ENCODE measurements at regions of chrX and their contacts with region 1.

Region 1: GRCh38 chrX:120769576-120770341 is 105.9 kb downstream of the CT47B1 start:
- DNase-seq: peak in 1 of 2 donors; percentile 4
- ATAC-seq: peak in 4 of 8 donors; percentile 42 to 59 (median 44)
- H3K4me3 ChIP-seq: no peak overlapping the region
- H3K27ac ChIP-seq: peak overlapping the region in 2 of 10 donors; percentile 19 to 44
- H3K4me1 ChIP-seq: peaks cover 0 to 12% (median 0%) of the 10 kb centered on the region in 9 donors
- H3K27me3 ChIP-seq: no peaks in the 10 kb centered on the region
- CTCF ChIP-seq: peak in 7 of 9 donors; percentile 17 to 58 (median 36)

Region 2: DNA sequence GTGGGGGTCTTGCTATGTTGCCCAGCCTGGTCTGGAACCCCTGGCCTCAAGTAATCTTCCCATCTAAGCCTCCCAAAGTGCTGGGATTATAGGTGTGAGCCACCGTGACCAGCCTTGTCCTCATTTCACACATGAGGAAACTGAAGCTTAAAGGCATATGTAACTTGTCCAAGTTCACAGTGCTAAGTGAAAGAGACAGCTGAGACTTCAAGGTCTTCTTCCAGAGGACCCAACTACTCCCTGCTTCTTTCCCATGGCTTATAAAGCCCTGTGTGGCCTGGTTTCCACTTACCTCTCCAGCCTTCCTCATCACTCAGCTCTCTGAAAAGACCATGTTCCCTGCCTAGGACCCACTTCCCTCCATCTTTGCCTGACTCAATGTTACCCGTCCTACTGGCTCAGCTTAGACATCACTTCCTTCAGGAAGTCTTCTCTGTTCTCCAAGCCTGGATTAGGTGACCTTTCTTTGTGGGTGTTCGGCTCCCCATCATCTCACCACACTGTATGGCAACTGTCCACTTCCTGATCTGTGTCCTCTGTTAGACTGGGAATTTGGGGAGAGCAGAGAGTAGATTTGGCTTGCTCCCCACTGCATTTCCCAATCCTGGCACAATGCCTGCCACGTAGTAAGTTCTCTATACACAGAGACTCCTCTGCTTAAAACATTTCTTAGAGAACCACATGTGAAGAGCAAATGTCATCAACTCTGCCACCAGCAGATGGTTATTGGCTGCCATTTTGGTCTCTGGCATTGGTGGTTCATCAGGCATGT is 270.3 kb before region 1 on chrX:
- intact Hi-C with region 1: loop called (anchors 2 to 10 kb)
- DNase-seq: peak in 1 of 2 donors; percentile 11
- ATAC-seq: no peak
- H3K4me3 ChIP-seq: no peak overlapping the region
- H3K27ac ChIP-seq: no peak overlapping the region
- H3K4me1 ChIP-seq: peaks cover 0 to 3% (median 0%) of the 10 kb centered on the region in 9 donors
- H3K27me3 ChIP-seq: no peaks in the 10 kb centered on the region
- CTCF ChIP-seq: no peak

Region 3: DNA sequence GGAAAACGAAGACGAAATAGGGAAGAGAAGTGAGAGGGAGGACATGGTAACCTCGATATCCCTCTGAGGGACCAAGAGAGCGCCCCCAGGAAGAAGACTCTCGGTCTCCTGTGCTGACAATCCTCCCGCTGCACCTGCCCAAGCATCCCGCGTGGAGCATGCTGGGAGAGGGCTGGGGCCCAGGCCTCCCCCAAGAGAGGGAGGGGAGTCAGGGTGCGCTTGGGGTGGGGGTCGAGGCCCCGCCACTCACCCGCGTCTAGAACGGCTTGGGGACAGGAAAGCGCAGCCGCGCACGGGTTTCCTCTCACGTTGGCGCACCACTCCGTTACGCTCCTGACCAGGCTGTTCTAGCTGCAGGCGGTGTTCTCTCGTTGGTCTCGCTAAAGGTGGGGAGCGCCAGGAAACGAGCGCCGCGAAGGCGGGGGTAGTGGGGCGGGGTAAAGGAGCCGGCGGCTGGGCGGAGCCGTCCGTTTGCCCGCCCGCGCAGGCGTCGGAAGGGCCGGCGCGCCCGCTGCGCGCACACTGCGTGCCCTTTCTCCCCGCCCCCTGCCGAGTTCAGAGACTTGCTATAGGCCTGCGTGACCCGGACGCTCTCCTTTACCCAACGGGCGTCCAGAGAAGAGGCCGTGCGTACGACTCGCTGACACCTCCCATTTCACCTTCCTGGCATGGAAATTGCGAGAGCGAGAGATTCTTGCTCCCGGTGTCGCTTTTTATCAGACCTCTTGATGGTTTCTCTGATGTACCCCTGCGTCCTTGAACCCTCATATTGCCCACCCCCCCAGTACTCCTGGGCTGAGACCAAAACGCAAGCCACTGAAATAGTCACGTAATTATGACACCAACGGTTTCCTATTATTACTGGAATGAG is 139.9 kb before region 1 on chrX and contains the start of gene C1GALT1C1:
- intact Hi-C with region 1: loop called in 1 of 10 experiments (anchors 10 kb)
- DNase-seq: peak; percentile 91 to 92
- ATAC-seq: peak; percentile 99 to 100 (median 99)
- H3K4me3 ChIP-seq: peak within 1 kb of the TSS; percentile 47 to 85 (median 75)
- H3K27ac ChIP-seq: peak within 1 kb of the TSS; percentile 67 to 94 (median 88)
- H3K4me1 ChIP-seq: peaks cover 0 to 26% (median 5%) of the 10 kb centered on the region in 9 donors
- H3K27me3 ChIP-seq: no peaks in the 10 kb centered on the region
- CTCF ChIP-seq: no peak
- total RNA-seq, gene C1GALT1C1: 13.6 to 22.7 (median 17.2) TPM

Region 4: DNA sequence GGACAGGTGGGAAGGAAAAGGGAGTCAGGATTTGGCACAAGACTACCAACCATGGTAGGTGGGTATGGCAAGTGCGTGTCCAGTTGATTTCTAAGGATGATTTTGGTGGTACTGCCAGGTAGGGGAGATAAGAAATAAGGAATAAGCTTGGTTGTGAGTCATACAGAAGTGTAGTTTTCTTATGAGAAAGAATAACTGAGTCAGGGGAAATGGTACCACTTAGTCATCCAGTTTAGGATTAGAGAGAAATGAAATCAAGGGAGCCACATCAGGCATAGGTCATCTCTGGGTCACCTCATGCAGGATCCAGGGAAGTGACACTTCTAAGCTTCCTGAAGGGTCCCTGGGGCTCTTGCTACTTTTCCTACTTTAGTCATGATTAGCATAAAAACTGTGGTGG is 32.8 kb before region 1 on chrX:
- intact Hi-C with region 1: no loop called
- DNase-seq: no peak
- ATAC-seq: no peak
- H3K4me3 ChIP-seq: no peak overlapping the region
- H3K27ac ChIP-seq: no peak overlapping the region
- H3K4me1 ChIP-seq: no peaks in the 10 kb centered on the region
- H3K27me3 ChIP-seq: no peaks in the 10 kb centered on the region
- CTCF ChIP-seq: no peak

Region 5: GRCh38 chrX:122122274-122122673 is 1352.5 kb after region 1 on chrX:
- intact Hi-C with region 1: no loop called
- DNase-seq: no peak
- ATAC-seq: no peak
- H3K4me3 ChIP-seq: no peak overlapping the region
- H3K27ac ChIP-seq: no peak overlapping the region
- H3K4me1 ChIP-seq: no peaks in the 10 kb centered on the region
- H3K27me3 ChIP-seq: no peaks in the 10 kb centered on the region
- CTCF ChIP-seq: no peak